PC-9 (cell line): ENCODE measurements at regions of chr4 and their contacts with region 1.

Region 1: DNA sequence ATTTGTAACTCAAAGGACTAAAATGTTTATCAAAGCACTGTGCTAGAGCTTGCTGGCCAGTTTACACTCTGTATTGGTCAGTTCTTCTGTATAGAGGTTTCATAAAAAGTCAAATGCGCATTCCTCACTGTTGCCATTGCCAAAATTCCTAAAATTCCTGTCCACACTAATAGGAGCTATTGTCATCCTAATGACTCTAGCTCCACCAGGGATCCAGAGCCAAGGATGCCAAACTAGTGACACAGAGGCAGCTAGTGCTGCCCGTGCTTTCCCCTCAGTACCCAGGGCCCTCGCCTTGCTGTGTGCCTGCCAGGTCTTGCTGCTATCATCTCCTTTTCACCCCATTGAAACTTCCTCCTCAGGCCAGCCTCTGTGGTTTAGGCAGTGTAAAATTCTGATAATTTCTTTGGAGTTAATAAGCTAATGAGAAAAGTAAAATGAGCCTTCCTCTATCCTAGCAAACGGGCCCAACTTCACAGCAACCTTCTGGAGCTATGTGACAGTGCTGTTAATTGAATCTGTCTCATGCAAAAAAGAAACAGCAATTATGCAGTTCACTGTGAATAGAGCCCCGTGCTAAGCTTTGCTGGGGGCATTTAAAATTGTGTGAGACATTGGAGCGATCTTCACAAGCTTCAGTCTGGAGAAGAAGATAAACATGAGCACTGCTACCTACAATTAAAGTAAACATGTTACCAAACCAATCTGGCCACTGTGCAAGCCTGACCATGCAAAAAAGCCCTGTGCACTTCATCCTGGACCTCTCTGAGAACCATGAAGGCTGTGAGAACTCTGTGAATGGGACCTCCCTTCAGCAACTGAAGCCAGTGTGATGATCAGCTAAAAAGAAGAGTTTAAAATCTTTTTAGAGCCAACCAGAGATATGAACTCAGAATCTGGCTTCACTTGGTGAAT is 43.1 kb upstream of the FGF2 start:
- DNase-seq: peak; percentile 85 to 96
- H3K4me3 ChIP-seq: no peak overlapping the region
- H3K27ac ChIP-seq: peak overlapping the region; percentile 56
- H3K4me1 ChIP-seq: peaks cover 47% of the 10 kb centered on the region
- H3K27me3 ChIP-seq: no peaks in the 10 kb centered on the region
- CTCF ChIP-seq: no peak

Region 2: GRCh38 chr4:122798101-122798500 is 14.5 kb after region 1 on chr4:
- CTCF ChIA-PET with region 1: no interaction called
- POLR2A ChIA-PET with region 1: no interaction called
- intact Hi-C with region 1: loop called (anchors 1 kb)
- DNase-seq: peak in 1 of 2 experiments; percentile 67
- H3K4me3 ChIP-seq: no peak overlapping the region
- H3K27ac ChIP-seq: no peak overlapping the region
- H3K4me1 ChIP-seq: no peaks in the 10 kb centered on the region
- H3K27me3 ChIP-seq: no peaks in the 10 kb centered on the region
- CTCF ChIP-seq: no peak

Region 3: GRCh38 chr4:122920473-122920872 is 136.9 kb after region 1 on chr4:
- CTCF ChIA-PET with region 1: no interaction called
- POLR2A ChIA-PET with region 1: no interaction called
- intact Hi-C with region 1: no loop called
- DNase-seq: no peak
- H3K4me3 ChIP-seq: no peak overlapping the region
- H3K27ac ChIP-seq: no peak overlapping the region
- H3K4me1 ChIP-seq: peaks cover 20% of the 10 kb centered on the region
- H3K27me3 ChIP-seq: no peaks in the 10 kb centered on the region
- CTCF ChIP-seq: no peak

Region 4: DNA sequence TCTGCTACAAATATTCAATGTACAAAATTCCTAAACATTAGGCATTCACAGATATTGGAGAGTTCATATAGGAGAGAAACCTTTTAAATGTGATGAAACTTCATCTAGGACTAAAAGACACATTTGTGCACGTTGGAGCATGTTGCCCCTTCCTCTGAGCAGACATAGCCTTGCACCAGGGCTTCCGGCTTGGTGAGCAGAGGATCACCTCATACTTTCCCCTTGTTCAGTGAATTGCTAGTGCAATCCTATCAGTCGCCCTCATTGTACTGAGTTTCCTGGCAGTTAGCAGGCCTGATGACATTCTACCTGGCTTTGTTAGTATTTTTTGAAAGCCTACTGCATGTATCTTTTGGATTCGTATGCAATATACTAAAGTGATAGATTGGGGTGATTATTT is 1079.3 kb after region 1 on chr4:
- CTCF ChIA-PET with region 1: interaction called, 10 read pairs
- POLR2A ChIA-PET with region 1: no interaction called
- intact Hi-C with region 1: no loop called
- DNase-seq: no peak
- H3K4me3 ChIP-seq: no peak overlapping the region
- H3K27ac ChIP-seq: no peak overlapping the region
- H3K4me1 ChIP-seq: no peaks in the 10 kb centered on the region
- H3K27me3 ChIP-seq: no peaks in the 10 kb centered on the region
- CTCF ChIP-seq: no peak